A549 (cell line): ENCODE measurements at regions of chr9 and their contacts with region 1.

Region 1: DNA sequence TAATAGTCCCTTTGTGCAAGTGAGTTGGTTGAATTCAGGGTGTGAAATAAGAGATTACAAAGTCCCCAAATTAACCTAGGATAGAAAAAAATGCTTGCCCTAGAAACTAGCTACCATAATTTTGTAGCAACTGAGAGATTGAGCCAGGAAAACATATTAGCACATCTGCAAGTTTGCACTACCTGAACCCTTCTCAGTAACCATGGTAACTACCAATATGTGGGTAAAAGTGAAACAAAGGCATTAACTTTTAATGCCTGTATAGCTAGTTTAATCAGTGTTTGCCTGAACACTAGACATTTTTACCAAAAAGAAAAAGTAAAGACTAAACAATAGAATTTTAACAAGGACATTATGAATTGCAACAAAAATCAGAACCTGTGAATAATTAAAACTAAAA is 45.8 kb upstream of the CKS2 start:
- DNase-seq: no peak
- ATAC-seq: no peak
- H3K4me3 ChIP-seq: no peak overlapping the region
- H3K27ac ChIP-seq: no peak overlapping the region
- H3K4me1 ChIP-seq: no peaks in the 10 kb centered on the region
- CTCF ChIP-seq: no peak
- EP300 ChIP-seq: no peak
- POLR2A ChIP-seq: no peak
- RAD21 ChIP-seq: no peak

Region 2: GRCh38 chr9:89278997-89279739 is 14.0 kb after region 1 on chr9:
- CTCF ChIA-PET with region 1: interaction called, 17 read pairs
- POLR2A ChIA-PET with region 1: no interaction called
- DNase-seq: peak; percentile 41 to 51
- ATAC-seq: peak in 1 of 2 experiments; percentile 78; a peak in 3 of 6 replicates
- H3K4me3 ChIP-seq: no peak overlapping the region
- H3K27ac ChIP-seq: no peak overlapping the region
- H3K4me1 ChIP-seq: no peaks in the 10 kb centered on the region
- CTCF ChIP-seq: peak; percentile 62
- EP300 ChIP-seq: no peak
- POLR2A ChIP-seq: no peak
- RAD21 ChIP-seq: peak; percentile 71 to 76